ENCODE measurements at regions of chrX and their contacts with region 1.

Region 1: GRCh38 chrX:18886344-18887161 is 97.4 kb downstream of the PHKA2 start:
- ATAC-seq: peak; percentile 76 to 88 (median 82)
- H3K4me3 ChIP-seq: no peak overlapping the region
- H3K27ac ChIP-seq: no peak overlapping the region
- H3K4me1 ChIP-seq: peaks cover 12 to 18% of the 10 kb centered on the region in 2 donors

Region 2: DNA sequence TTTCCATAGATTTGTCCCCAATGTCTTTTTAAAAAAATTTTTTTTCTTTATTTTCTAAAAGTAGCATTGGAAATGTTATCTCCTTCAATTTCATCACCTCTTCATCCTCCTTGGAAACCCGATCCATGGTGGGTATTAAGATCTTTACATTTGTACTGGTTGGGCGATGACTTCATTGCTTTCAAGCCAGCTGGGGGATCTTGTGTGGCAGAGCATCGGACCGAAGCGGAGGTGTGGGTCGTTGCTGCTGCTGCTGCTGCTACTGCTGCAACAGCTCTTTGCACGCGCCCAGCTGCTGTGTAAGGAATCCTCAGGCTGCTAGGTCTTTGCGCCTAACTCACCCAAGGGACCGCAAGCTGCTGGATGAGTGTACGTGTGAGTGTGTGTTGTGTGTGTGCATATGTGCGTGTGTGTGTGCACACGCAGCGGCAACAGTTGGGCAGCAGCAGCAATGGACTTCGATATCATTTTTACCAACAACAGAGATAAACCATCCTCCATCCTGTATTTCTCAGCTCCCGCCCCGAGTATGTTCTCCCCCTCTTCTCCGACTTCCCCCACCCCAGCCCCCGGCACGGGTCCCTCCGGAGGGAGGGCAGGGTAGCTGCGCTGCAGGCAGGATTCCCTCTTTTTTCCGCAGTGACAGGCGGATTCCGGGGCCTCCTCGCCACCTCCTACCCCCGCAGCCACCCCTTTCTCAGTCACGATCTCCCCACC is 461.9 kb before region 1 on chrX:
- in situ Hi-C with region 1: loop called in 2 of 9 experiments (anchors 25 kb)
- ATAC-seq: peak in 5 of 8 experiments; percentile 51 to 61 (median 58)
- H3K4me3 ChIP-seq: peak overlapping the region; percentile 55 to 96 (median 83)
- H3K27ac ChIP-seq: peak overlapping the region; percentile 30 to 78
- H3K4me1 ChIP-seq: peaks cover 0 to 15% of the 10 kb centered on the region in 2 donors

Region 3: DNA sequence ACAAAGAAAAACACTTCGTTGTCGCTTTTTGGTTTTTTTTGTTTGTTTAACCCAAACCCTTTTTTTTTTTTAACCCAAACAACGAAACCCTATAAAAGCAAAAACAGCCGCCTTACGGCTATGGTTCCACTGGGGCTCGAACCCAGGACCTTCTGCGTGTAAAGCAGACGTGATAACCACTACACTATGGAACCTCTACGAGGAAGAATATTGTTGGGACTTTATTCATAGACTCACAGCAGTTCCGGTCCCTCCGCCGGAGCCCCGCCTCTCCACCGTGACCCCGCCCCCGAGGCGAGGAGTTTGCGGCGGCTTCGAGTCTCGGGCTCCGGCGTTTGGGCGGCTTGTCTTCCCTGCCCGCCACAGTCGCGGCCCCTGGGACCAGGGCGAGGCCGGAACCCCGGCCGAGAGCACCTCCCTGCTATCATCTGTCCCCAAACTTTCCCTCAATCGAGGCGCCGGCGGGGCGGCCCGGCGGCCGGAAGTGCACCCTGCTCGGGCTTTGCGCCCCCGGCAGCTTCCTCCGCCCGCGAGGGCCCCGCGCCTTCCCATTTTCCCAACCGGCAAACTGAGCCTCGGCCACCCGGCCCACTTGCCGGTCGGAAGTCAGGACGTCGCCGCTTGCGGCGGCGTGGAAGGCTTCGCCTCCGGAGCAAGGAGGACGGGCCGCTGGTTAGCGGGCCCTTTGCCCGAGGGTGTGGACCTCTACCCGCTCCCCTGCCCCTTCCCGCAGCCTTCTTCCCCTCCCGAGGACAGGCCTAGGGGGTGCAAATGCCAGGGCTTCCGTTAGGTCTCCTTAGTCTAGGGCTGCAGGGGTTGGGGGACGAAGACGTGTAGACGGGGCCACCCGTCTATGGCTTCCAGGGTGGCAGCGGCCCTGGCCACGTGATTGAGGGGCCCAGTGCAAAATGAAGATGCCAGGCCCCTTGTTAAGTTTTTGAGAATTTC is 211.5 kb before region 1 on chrX:
- in situ Hi-C with region 1: loop called in 1 of 9 experiments (anchors 25 kb)
- ATAC-seq: peak; percentile 91 to 95 (median 94)
- H3K4me3 ChIP-seq: peak overlapping the region; percentile 57 to 98 (median 66)
- H3K27ac ChIP-seq: peak overlapping the region in 1 of 2 donors; percentile 57
- H3K4me1 ChIP-seq: no peaks in the 10 kb centered on the region

Measured in motor neuron (in vitro differentiated cells).